ENCODE measurements at regions of chr14 and their contacts with region 1.

Region 1: DNA sequence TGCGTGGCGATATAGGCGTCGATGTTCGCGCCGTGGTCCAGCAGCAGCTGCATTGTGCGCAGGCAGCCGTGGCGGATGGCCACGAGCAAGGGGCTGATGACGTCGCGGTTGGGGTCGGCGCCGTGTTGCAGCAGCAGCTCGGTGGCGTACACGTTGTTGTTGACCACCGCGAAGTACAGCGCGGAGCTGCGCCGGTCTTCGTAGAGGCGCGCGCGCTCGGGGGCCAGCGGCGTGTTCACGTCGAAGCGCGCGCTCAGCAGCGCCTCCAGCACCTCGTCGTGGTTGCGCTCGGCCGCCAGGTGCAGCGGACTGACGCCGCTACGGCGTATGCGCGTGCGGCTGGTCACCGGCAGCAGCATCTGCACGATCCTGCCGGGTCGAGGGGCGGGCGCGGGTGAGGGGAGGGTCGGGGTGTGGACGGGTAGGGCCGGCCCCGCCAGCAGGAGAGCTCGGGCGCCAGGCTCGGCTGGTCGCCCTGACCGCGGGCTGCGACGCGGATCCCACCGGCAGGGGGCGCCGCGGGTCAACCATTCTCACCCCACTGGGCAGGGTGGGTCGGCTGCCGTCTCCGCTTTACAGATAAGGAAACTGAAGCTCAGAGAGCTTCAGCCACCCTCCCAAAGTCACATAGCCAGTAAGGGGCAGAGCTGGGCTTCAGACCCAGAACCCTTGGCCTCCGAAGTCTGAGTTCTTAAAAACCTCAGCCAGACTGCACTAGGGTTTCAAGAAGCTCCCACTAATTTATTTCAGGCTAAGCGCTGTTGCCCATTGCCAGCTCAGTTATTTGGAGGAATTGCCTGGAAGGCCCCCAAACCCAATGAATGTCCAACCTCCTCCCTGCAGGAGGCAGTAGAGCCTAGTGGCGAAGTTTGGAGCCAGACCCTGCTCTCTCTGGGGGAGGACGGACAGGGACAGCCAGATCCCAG is 12.4 kb downstream of the FAM181A start:
- DNase-seq: peak; percentile 92
- H3K4me3 Mint-ChIP-seq: peak overlapping the region; percentile 57
- H3K27ac Mint-ChIP-seq: no peak overlapping the region
- H3K4me1 Mint-ChIP-seq: peaks cover 7% of the 10 kb centered on the region
- H3K27me3 Mint-ChIP-seq: peaks cover 19% of the 10 kb centered on the region

Region 2: GRCh38 chr14:93923626-93924025 is 15.9 kb before region 1 on chr14:
- CTCF ChIA-PET with region 1: interaction called, 10 read pairs
- intact Hi-C with region 1: no loop called
- DNase-seq: no peak
- H3K4me3 Mint-ChIP-seq: no peak overlapping the region
- H3K27ac Mint-ChIP-seq: no peak overlapping the region
- H3K4me1 Mint-ChIP-seq: no peaks in the 10 kb centered on the region
- H3K27me3 Mint-ChIP-seq: no peaks in the 10 kb centered on the region

Region 3: GRCh38 chr14:93959239-93960107 is 19.9 kb after region 1 on chr14:
- CTCF ChIA-PET with region 1: interaction called, 316 read pairs
- intact Hi-C with region 1: no loop called
- DNase-seq: peak; percentile 98
- H3K4me3 Mint-ChIP-seq: peak overlapping the region; percentile 68
- H3K27ac Mint-ChIP-seq: peak overlapping the region; percentile 99
- H3K4me1 Mint-ChIP-seq: peaks cover 95% of the 10 kb centered on the region
- H3K27me3 Mint-ChIP-seq: no peaks in the 10 kb centered on the region

Region 4: GRCh38 chr14:93975791-93976476 is 36.4 kb after region 1 on chr14:
- CTCF ChIA-PET with region 1: interaction called, 316 read pairs
- intact Hi-C with region 1: no loop called
- DNase-seq: peak; percentile 65
- H3K4me3 Mint-ChIP-seq: peak overlapping the region; percentile 55
- H3K27ac Mint-ChIP-seq: peak overlapping the region; percentile 95
- H3K4me1 Mint-ChIP-seq: peaks cover 85% of the 10 kb centered on the region
- H3K27me3 Mint-ChIP-seq: no peaks in the 10 kb centered on the region

Region 5: GRCh38 chr14:94001501-94002396 is 62.2 kb after region 1 on chr14:
- CTCF ChIA-PET with region 1: interaction called, 384 read pairs
- intact Hi-C with region 1: loop called (anchors 1 kb)
- DNase-seq: peak; percentile 71
- H3K4me3 Mint-ChIP-seq: no peak overlapping the region
- H3K27ac Mint-ChIP-seq: no peak overlapping the region
- H3K4me1 Mint-ChIP-seq: peaks cover 17% of the 10 kb centered on the region
- H3K27me3 Mint-ChIP-seq: no peaks in the 10 kb centered on the region

Region 6: DNA sequence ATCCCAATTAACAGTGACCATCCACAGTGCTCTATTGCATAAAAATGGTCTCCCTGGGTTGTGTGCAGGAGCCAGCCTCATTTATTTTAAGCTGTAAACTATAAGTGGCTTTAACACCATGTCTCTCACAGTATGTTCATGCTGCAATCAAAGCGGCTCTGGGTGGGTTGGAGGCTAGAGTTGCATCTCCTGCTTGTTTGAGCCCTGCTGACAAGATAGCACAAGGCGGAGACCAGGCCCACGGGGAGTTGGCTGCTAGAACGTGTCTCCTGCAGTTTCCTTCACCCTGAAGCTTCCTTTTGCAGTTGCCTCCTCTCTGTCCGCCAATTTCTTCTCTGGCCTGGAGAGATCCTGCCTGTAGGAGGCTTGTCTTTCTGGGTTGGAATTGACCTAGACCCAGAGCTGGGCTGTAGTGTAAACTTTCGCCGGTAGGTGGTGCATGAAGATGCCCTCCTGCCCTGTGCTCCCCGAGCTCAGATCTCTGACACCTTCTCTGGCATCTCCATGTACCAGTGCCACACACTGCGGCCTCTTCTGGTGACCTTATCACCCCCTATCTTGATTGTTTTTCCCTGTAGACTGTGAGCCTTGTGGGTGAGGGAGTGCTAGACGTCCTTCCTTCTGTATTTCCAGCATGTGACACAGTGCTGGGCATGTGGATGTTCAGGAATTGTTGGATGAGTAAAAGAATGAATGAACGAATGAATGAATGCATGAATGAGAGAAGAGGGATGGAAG is 96.9 kb after region 1 on chr14:
- CTCF ChIA-PET with region 1: interaction called, 16 read pairs
- intact Hi-C with region 1: no loop called
- DNase-seq: peak; percentile 88
- H3K4me3 Mint-ChIP-seq: no peak overlapping the region
- H3K27ac Mint-ChIP-seq: no peak overlapping the region
- H3K4me1 Mint-ChIP-seq: peaks cover 3% of the 10 kb centered on the region
- H3K27me3 Mint-ChIP-seq: no peaks in the 10 kb centered on the region

Region 7: GRCh38 chr14:94136575-94137331 is 197.2 kb after region 1 on chr14:
- CTCF ChIA-PET with region 1: interaction called, 12 read pairs
- intact Hi-C with region 1: loop called (anchors 1 kb)
- DNase-seq: peak; percentile 95
- H3K4me3 Mint-ChIP-seq: no peak overlapping the region
- H3K27ac Mint-ChIP-seq: no peak overlapping the region
- H3K4me1 Mint-ChIP-seq: peaks cover 2% of the 10 kb centered on the region
- H3K27me3 Mint-ChIP-seq: no peaks in the 10 kb centered on the region

Measured in activated naive CD4-positive, alpha-beta T cell treated with anti-CD3 and anti-CD28 coated beads for 36 hours (primary cell).